Psoas muscle (tissue), 8 donors: ENCODE measurements at regions of chrX and their contacts with region 1.

Region 1: GRCh38 chrX:74579597-74580198 is 34.7 kb downstream of the RLIM start:
- DNase-seq: no peak
- ATAC-seq: no peak
- H3K4me3 ChIP-seq: no peak overlapping the region
- H3K27ac ChIP-seq: no peak overlapping the region
- H3K4me1 ChIP-seq: no peaks in the 10 kb centered on the region
- H3K27me3 ChIP-seq: no peaks in the 10 kb centered on the region
- CTCF ChIP-seq: no peak

Region 2: DNA sequence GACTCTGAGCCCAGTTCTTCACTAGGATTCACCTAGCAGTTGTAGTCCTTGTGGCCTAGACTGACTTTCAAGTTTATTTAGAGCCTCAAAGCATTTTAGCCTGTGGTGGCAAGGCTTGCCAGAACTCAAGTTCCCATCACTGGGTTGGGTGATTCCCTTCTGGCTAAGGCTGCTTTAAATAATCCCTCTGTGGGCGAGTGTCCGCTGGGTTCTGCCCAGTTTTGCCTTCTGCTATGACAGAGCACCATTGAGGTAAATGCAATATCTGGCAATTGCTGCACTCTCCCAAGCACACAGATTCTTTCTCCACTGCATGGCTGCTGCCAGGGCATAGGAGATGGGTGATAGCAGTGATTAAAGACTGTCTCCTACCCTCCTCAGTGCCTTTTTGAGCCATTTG is 125.6 kb after region 1 on chrX:
- intact Hi-C with region 1: loop called in 1 of 2 experiments (anchors 5 kb)
- DNase-seq: no peak
- ATAC-seq: no peak
- H3K4me3 ChIP-seq: no peak overlapping the region
- H3K27ac ChIP-seq: no peak overlapping the region
- H3K4me1 ChIP-seq: no peaks in the 10 kb centered on the region
- H3K27me3 ChIP-seq: peaks cover 0 to 33% (median 0%) of the 10 kb centered on the region in 3 donors
- CTCF ChIP-seq: no peak

Region 3: GRCh38 chrX:74736450-74736849 is 156.8 kb after region 1 on chrX:
- intact Hi-C with region 1: no loop called
- DNase-seq: no peak
- ATAC-seq: no peak
- H3K4me3 ChIP-seq: no peak overlapping the region
- H3K27ac ChIP-seq: no peak overlapping the region
- H3K4me1 ChIP-seq: no peaks in the 10 kb centered on the region
- H3K27me3 ChIP-seq: peaks cover 0 to 4% (median 0%) of the 10 kb centered on the region in 3 donors
- CTCF ChIP-seq: no peak